Dendritic cell treated with granulocyte-macrophage colony-stimulating factor and Interleukin-4, amounts not matched to agents 40 ng/mL and 50 ng/mL, for 4 days (primary cell): ENCODE measurements at regions of chr11 and their contacts with region 1.

Region 1: DNA sequence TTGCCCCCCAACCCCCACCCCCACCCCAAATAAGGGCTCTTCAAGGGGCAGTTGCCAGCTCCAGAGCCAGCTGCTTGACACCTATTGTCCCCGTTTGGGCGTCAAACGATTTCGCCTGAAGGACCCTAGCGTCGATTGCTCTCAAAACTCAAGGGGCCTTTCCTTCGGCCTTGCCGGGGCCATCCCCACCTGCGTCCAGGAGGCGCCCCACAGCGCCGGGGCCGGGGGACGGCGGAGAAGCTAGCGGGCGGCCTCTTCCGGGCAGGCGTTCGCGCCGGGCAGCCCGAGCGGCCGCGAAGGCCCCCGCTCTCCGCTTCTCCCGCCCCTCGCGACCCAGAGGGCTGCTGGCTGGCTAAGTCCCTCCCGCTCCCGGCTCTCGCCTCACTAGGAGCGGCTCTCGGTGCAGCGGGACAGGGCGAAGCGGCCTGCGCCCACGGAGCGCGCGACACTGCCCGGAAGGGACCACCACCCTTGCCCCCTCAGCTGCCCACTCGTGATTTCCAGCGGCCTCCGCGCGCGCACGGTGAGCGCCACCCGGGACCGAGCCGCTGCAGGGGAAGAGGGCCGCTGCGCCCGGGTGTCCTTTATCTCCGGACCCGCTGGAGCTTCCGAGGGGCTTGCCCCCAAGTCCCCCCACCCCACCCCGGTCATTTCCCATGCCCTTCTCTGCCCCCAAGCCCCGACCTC is at the start of gene CAPRIN1:
- H3K4me3 Mint-ChIP-seq: peak within 1 kb of the TSS; percentile 97
- H3K27ac Mint-ChIP-seq: peak within 1 kb of the TSS; percentile 94
- H3K4me1 Mint-ChIP-seq: peaks cover 32% of the 10 kb centered on the region
- H3K27me3 Mint-ChIP-seq: no peaks in the 10 kb centered on the region

Region 2: DNA sequence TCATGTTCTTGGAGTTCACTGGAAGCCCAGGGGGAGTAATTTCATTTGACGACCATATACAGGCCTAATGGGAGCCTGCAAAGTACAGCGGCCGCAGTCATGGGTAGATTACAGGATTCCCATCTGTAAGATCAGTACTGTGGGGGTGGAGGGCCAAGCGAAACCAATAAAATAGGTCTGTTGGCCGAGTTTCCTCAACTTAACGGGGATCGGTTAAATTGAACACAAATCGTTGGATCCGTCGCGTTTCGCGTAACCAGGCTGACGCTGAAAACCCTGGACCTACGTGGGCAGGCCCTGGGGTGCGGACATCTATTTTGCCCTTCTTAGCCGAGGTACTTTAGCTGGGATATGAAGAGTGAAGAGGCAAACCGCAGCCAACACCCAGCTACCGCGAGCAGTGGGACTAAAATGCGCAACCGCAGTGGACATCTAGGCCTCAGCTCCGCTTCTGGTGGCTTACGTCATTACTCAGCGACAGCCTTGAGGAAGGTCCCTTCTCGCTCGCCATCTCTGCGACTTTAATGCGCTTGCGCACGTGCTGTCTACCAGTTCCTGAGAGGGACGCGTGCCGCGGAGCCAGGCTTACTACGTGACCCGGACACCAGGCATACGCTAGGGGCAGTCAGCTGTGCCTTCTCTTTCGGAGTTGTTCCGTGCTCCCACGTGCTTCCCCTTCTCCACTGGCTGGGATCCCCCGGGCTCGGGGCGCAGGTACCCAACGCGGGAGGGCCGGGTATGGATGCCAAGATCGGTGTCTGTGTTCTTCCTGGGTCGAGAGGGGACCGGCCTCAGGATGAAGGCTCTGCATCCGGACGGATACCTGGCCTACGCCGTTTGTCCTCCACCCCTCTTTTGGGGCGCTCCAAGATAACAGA is 53.8 kb after region 1 on chr11 and contains the start of gene NAT10:
- intact Hi-C with region 1: loop called (anchors 1 kb)
- H3K4me3 Mint-ChIP-seq: peak within 1 kb of the TSS; percentile 84
- H3K27ac Mint-ChIP-seq: peak within 1 kb of the TSS; percentile 96
- H3K4me1 Mint-ChIP-seq: peaks cover 30% of the 10 kb centered on the region
- H3K27me3 Mint-ChIP-seq: no peaks in the 10 kb centered on the region

Region 3: GRCh38 chr11:34274723-34275401 is 223.4 kb after region 1 on chr11:
- intact Hi-C with region 1: no loop called
- H3K4me3 Mint-ChIP-seq: no peak overlapping the region
- H3K27ac Mint-ChIP-seq: no peak overlapping the region
- H3K4me1 Mint-ChIP-seq: peaks cover 2% of the 10 kb centered on the region
- H3K27me3 Mint-ChIP-seq: peaks cover 5% of the 10 kb centered on the region

Region 4: DNA sequence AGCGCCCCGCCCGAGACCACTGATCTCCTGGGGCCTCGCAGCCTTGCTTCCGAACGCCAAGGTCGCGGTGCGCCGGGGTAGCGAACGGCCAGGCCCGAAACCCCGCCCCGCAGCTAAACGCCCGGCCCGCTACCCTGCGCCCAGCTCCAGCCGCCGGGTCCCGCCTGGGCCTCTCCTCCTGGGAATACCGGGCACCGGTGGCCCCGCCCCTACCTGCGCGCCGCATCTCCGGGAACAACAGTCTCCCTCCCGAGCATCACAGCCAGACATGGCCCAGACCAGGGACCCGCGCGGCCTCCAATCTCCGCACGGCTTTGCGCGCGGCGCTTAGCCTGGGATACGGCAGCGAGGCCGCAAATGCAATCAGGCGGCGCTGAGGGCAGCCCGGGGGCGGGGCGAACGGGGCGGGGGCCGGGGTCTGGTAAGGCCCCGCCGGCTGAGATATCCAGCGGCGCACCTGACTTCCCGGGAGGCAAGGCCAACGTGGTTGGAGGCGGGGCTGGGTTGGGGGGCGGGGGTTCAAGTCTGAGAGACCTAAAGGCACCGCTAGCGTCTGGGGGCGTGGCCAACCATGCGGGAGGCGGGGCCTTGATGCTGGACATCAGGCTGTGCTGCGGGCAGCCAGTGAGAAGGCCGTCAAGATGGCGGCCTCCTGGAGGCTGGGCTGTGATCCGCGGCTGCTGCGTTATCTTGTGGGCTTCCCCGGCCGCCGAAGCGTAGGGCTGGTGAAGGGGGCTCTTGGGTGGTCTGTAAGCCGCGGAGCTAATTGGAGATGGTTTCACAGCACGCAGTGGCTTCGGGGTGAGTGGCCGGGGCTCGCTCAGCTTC is 864.7 kb after region 1 on chr11 and contains the starts of genes APIP and PDHX:
- intact Hi-C with region 1: loop called (anchors 5 kb)
- H3K4me3 Mint-ChIP-seq: peak within 1 kb of the TSS; percentile 96
- H3K27ac Mint-ChIP-seq: peak within 1 kb of the TSS; percentile 98
- H3K4me1 Mint-ChIP-seq: peaks cover 61% of the 10 kb centered on the region
- H3K27me3 Mint-ChIP-seq: no peaks in the 10 kb centered on the region